ENCODE measurements at regions of chr3 and their contacts with region 1.

Region 1: DNA sequence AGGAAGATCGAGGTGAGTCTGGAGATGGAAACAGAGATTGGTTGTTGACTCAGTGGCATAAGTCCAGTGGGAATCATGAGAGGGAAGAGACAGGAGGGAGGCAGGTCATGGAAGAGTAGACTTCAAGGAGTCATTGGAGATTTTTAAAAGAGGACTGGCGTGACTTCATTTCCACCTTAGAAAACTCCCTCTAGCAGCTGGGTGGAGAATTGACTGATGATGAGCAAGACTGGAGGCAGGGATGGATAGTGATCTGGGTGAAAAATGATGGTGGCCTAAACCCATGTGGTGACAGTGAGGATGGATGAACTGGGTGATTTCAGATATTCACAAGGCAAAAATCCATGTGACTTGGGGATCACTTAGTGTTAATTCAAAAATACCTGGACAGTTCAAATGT is 23.1 kb upstream of the CPNE4 start:
- DNase-seq: no peak
- H3K4me3 Mint-ChIP-seq: no peak overlapping the region
- H3K27ac Mint-ChIP-seq: no peak overlapping the region
- H3K4me1 Mint-ChIP-seq: peaks cover 5% of the 10 kb centered on the region
- H3K27me3 Mint-ChIP-seq: no peaks in the 10 kb centered on the region
- CTCF ChIP-seq: no peak

Region 2: DNA sequence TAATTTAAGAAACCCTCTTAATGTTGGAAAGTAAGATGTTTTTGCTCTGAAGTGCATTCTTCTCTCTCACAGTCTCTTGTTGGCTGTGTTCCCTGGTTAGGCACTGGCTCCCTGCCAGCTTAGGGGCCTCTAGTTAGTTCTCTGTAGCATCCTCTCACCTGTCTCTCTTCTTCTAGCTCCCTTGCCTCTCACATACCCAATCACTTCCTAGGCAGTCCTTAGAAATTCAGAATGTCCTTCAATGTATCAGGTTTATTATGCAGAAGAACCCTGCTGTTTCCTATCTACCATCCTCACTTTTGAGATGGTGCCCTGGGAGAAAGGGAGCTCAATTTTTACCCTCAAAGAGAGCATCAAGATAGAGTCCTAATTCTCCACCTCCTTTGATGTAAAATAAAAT is 13.1 kb after region 1 on chr3:
- CTCF ChIA-PET with region 1: interaction called, 11 read pairs
- POLR2A ChIA-PET with region 1: no interaction called
- intact Hi-C with region 1: no loop called
- DNase-seq: peak; percentile 39
- H3K4me3 Mint-ChIP-seq: no peak overlapping the region
- H3K27ac Mint-ChIP-seq: no peak overlapping the region
- H3K4me1 Mint-ChIP-seq: no peaks in the 10 kb centered on the region
- H3K27me3 Mint-ChIP-seq: no peaks in the 10 kb centered on the region
- CTCF ChIP-seq: no peak

Measured in MCF 10A (cell line).